H1 (cell line): ENCODE measurements at regions of chr5 and their contacts with region 1.

Region 1: DNA sequence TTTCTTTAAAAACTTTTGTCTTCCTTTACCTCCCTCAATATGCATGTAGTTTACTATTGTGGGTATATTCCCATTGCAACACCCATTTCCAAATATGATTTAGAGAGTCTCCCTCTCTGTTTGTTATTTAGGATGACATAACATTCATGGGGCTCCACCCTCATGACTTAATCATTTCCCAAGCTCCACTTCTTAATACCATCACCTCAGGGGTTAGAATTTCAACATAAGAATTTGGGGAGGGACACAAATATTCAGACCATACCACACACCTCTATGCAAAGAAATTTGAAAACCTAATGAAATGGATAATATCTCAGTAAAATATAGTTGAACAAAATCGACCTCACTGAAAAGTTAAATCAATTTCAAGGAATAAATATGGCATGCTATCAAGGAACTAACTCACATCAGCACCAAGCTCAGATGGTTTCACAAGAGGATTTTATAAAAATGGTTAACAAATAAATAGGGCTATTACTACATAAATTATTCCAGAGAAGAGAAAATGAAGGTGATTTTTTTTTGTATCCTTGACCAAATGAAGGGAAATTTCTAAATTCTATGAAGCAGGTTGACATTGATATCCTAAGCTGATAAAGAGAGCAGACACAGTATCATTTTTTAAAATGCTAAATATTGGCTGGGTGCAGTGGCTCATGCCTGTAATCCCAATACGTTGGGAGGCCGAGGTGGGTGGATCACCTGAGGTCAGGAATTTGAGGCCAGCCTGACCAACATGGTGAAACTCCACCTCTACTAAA is 20.2 kb upstream of the UBTD2 start:
- DNase-seq: no peak
- H3K4me3 ChIP-seq: no peak overlapping the region
- H3K27ac ChIP-seq: no peak overlapping the region
- H3K4me1 ChIP-seq: no peaks in the 10 kb centered on the region
- H3K27me3 ChIP-seq: no peaks in the 10 kb centered on the region
- CTCF ChIP-seq: no peak
- EP300 ChIP-seq: no peak
- POLR2A ChIP-seq: no peak
- RAD21 ChIP-seq: no peak

Region 2: GRCh38 chr5:172216345-172216744 is 87.4 kb before region 1 on chr5:
- CTCF ChIA-PET with region 1: no interaction called
- POLR2A ChIA-PET with region 1: no interaction called
- DNase-seq: no peak
- H3K4me3 ChIP-seq: no peak overlapping the region
- H3K27ac ChIP-seq: no peak overlapping the region
- H3K4me1 ChIP-seq: no peaks in the 10 kb centered on the region
- H3K27me3 ChIP-seq: no peaks in the 10 kb centered on the region
- CTCF ChIP-seq: no peak
- EP300 ChIP-seq: no peak
- POLR2A ChIP-seq: no peak
- RAD21 ChIP-seq: no peak

Region 3: DNA sequence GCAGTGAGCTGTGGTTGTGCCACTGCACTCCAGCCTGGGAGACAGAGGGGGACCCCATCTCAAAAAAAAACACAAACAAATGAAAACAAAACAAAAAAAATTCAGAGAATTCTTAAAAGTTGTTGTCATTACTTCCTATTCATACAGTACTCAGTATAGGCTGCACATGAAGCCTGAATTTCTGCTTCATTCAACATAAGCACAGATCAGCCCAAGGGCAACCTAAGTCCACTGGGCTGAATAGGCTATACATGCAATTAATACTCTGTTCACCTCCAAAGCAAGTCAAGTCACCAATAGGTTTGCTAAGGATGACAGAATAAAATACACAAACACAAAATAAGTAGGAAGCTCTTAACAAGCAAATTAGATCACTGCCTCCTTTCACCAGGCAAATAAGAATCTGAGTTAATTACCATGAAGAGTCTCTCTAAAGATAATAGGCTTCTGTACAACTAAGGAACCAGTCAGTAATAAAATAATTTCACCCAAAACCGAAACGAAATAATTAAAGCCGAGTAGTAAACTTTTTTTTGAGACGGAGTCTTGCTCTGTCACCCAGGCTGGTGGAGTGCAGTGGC is 38.8 kb before region 1 on chr5:
- CTCF ChIA-PET with region 1: no interaction called
- POLR2A ChIA-PET with region 1: no interaction called
- DNase-seq: no peak
- H3K4me3 ChIP-seq: no peak overlapping the region
- H3K27ac ChIP-seq: no peak overlapping the region
- H3K4me1 ChIP-seq: peaks cover 0 to 5% (median 1%) of the 10 kb centered on the region in 4 experiments; a peak in 1 of 7 replicates
- H3K27me3 ChIP-seq: no peaks in the 10 kb centered on the region
- CTCF ChIP-seq: no peak
- EP300 ChIP-seq: no peak
- POLR2A ChIP-seq: no peak
- RAD21 ChIP-seq: no peak

Region 4: GRCh38 chr5:172293054-172293744 is 10.6 kb before region 1 on chr5:
- CTCF ChIA-PET with region 1: interaction called, 17 read pairs
- POLR2A ChIA-PET with region 1: no interaction called
- DNase-seq: peak; percentile 27 to 58
- H3K4me3 ChIP-seq: no peak overlapping the region
- H3K27ac ChIP-seq: no peak overlapping the region
- H3K4me1 ChIP-seq: peaks cover 0 to 4% (median 0%) of the 10 kb centered on the region in 4 experiments; a peak in 1 of 7 replicates
- H3K27me3 ChIP-seq: no peaks in the 10 kb centered on the region
- CTCF ChIP-seq: peak; percentile 59 to 90 (median 78)
- EP300 ChIP-seq: no peak
- POLR2A ChIP-seq: no peak
- RAD21 ChIP-seq: peak; percentile 86 to 93

Region 5: GRCh38 chr5:172322028-172322965 is 18.5 kb after region 1 on chr5:
- CTCF ChIA-PET with region 1: no interaction called
- POLR2A ChIA-PET with region 1: no interaction called
- DNase-seq: no peak
- H3K4me3 ChIP-seq: no peak overlapping the region
- H3K27ac ChIP-seq: no peak overlapping the region
- H3K4me1 ChIP-seq: no peaks in the 10 kb centered on the region
- H3K27me3 ChIP-seq: no peaks in the 10 kb centered on the region
- CTCF ChIP-seq: no peak
- EP300 ChIP-seq: no peak
- POLR2A ChIP-seq: no peak
- RAD21 ChIP-seq: no peak

Region 6: DNA sequence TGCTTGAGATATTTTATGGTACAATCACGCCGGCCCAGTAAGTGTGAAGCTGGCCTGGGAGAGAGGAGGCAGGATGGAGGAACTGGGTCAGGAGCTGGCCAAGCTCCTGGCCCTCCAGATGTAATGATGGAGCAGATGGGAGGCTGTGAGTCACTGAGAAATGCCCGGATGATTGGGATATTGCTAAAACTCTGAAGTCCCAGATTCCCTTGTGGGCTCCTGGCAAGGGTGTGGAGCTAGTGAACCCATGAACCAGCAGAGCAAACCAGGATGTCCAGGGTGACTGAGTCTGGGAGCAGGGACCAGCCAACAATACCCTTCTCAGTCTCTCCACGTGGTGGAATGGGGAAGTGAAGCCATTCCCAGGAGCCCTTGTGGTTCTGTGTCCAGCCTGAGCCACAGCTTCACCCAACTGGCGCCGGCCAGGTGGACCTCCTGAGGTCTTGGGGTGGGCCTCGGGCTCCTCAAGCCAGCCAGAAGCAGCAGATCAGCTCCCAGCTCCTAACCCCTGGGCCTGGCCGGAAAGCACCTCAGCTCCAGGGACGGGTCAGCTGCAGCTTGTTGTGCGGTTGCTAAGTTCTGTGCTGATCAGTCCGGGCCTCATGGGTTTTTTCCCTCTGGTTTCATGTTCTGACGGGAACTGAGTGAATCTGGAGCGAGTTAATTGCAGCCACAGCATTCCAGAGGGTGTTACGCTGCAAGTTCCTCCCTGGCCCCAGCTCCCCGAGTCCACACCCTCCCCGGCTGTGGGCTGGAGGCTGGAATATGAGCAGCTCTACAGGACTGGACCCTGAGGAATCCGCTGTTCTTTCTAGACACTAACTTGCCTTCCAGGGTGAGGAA is 429.6 kb after region 1 on chr5:
- CTCF ChIA-PET with region 1: no interaction called
- POLR2A ChIA-PET with region 1: no interaction called
- DNase-seq: no peak
- H3K4me3 ChIP-seq: no peak overlapping the region
- H3K27ac ChIP-seq: no peak overlapping the region
- H3K4me1 ChIP-seq: no peaks in the 10 kb centered on the region; a peak in 1 of 7 replicates
- H3K27me3 ChIP-seq: peaks cover 0 to 2% (median 0%) of the 10 kb centered on the region in 4 experiments; a peak in 1 of 7 replicates
- CTCF ChIP-seq: no peak
- EP300 ChIP-seq: no peak
- POLR2A ChIP-seq: no peak
- RAD21 ChIP-seq: no peak